Ascending aorta (tissue), 2 donors: ENCODE measurements at regions of chr1 and their contacts with region 1.

Region 1: GRCh38 chr1:41152622-41153044 is 89.5 kb downstream of the SCMH1 start:
- DNase-seq: peak in 1 of 2 donors; percentile 67
- H3K4me3 ChIP-seq: no peak overlapping the region
- H3K27ac ChIP-seq: peak overlapping the region; percentile 78 to 79
- H3K4me1 ChIP-seq: peaks cover 3 to 16% of the 10 kb centered on the region in 2 donors
- H3K27me3 ChIP-seq: no peaks in the 10 kb centered on the region
- CTCF ChIP-seq: no peak

Region 2: GRCh38 chr1:40979233-40980067 is 173.2 kb before region 1 on chr1 and contains the start of gene CTPS1:
- intact Hi-C with region 1: loop called (anchors 5 kb)
- DNase-seq: peak; percentile 71 to 96
- H3K4me3 ChIP-seq: peak within 1 kb of the TSS; percentile 78 to 83
- H3K27ac ChIP-seq: peak within 1 kb of the TSS; percentile 96 to 98
- H3K4me1 ChIP-seq: peaks cover 7 to 30% of the 10 kb centered on the region in 2 donors
- H3K27me3 ChIP-seq: no peaks in the 10 kb centered on the region
- CTCF ChIP-seq: peak in 1 of 3 experiments; percentile 21
- total RNA-seq, gene CTPS1: 33.0 TPM

Region 3: DNA sequence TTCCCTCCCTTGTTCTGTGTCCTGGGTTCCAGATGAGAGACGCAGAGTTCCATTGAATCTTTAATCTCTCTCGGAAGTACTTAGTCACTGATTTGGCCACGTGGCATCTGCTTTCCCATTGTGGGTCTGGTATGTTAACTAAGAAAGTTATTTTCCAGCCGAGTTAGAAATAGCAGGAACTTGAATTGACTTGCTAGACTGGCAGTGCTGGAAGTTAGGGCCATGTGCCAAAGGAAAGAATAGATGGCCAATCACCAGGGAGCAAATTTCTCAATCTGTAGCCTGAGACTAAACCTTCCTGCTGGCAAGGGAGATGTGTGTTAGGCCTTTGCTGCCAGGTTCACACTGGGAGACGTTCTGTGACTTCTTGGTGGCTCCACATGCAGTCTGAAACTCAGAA is 106.9 kb before region 1 on chr1:
- intact Hi-C with region 1: loop called (anchors 2 kb)
- DNase-seq: peak; percentile 57 to 94
- H3K4me3 ChIP-seq: no peak overlapping the region
- H3K27ac ChIP-seq: peak overlapping the region; percentile 76 to 88
- H3K4me1 ChIP-seq: peaks cover 6 to 35% of the 10 kb centered on the region in 2 donors
- H3K27me3 ChIP-seq: no peaks in the 10 kb centered on the region
- CTCF ChIP-seq: no peak

Region 4: DNA sequence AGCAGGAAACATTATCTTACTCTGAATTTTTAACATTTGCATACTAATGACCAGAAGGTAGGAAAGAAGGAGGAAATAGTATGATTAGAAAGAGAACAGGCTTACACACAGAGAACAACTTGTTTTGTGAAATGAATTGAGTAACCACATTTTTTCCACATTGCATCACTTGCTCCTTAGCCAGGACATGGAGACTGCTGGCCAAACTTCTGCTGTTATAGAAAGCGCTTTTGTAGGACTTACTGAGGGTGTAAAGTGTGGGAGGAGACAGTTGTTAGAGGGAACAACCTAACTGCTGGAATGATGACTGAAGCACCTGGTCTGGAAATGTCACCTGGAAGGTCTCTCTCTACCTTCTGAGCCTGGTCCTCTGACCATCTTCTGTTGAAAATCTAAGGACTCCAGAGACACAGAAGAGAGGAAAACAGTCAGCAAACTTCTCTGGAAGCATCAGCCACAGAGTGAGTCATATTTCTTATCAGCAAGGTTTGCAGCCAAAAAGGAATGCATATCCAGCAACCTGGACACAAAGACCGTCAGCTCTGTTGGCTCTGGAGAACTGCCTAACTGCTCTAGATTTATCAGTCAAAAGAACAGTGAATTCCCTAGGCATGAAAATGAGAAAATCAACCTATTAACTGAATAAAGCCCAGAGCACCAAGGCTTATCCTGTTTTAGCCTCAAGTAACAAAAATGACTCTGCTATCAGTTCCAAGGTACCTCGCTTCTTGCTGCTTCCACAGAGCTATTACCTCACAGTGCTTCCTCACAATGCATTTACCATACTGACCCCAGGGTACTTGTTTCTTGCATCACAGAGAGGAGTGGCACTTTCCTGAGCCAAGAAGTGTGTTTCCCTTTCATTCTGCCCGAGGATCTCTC is 43.1 kb before region 1 on chr1:
- intact Hi-C with region 1: loop called (anchors 2 kb)
- DNase-seq: peak in 1 of 2 donors; percentile 76
- H3K4me3 ChIP-seq: peak overlapping the region in 1 of 2 donors; percentile 42
- H3K27ac ChIP-seq: peak overlapping the region; percentile 98 to 99
- H3K4me1 ChIP-seq: peaks cover 8 to 25% of the 10 kb centered on the region in 2 donors
- H3K27me3 ChIP-seq: no peaks in the 10 kb centered on the region
- CTCF ChIP-seq: no peak

Region 5: GRCh38 chr1:41241782-41242341 is 89.2 kb after region 1 on chr1 and contains the start of gene SCMH1:
- intact Hi-C with region 1: loop called (anchors 2 kb)
- DNase-seq: peak in 1 of 2 donors; percentile 68
- H3K4me3 ChIP-seq: peak within 1 kb of the TSS; percentile 90 to 95
- H3K27ac ChIP-seq: peak within 1 kb of the TSS; percentile 96 to 98
- H3K4me1 ChIP-seq: peaks cover 0 to 16% of the 10 kb centered on the region in 2 donors
- H3K27me3 ChIP-seq: no peaks in the 10 kb centered on the region
- CTCF ChIP-seq: no peak
- total RNA-seq, gene SCMH1: 55.9 TPM

Region 6: GRCh38 chr1:41387667-41388091 is 235.0 kb after region 1 on chr1:
- intact Hi-C with region 1: loop called (anchors 10 kb)
- DNase-seq: peak in 1 of 2 donors; percentile 85
- H3K4me3 ChIP-seq: no peak overlapping the region
- H3K27ac ChIP-seq: peak overlapping the region in 1 of 2 donors; percentile 17
- H3K4me1 ChIP-seq: peaks cover 0 to 15% of the 10 kb centered on the region in 2 donors
- H3K27me3 ChIP-seq: no peaks in the 10 kb centered on the region
- CTCF ChIP-seq: no peak

Region 7: DNA sequence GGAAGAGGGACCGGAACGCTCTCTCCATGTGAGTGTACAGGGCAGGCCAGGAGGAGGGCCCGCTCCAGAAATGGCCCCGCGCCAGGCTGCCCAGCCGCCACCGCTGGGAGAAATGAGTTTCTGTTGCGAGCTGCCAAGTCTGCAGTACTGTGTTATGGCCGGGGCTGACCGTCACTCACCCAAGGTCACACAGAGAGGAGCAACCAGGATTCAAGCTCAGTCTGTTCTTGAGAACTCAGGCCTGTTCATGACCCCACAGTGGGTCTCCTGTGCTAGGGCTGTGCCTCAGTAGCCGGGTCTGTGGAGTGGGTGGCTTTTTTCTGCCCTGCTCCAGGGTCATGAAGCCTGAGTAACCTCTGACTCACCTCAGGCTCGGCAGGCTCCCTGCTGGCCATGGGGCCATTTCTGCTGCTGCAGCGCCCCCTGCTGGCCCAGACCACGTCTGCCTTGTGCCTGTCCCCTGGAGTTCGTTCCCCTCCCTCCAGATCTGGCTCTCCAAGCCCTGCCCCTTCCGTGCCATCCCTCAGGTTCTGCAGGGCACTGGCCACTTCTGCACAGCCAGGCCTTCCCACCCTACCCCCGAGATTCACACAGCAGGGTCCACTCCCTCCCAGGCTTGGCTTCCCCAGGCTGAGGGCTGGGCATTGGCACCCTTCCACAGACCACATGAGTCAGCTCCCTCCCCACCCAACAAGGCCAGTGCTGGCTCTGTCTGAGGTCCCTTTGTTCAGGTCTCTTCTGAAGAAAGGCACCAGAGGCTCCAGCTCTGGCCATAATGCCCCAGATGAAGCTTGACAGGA is 280.0 kb after region 1 on chr1:
- intact Hi-C with region 1: loop called (anchors 10 kb)
- DNase-seq: peak; percentile 52 to 96
- H3K4me3 ChIP-seq: peak overlapping the region; percentile 0 to 13
- H3K27ac ChIP-seq: peak overlapping the region; percentile 46 to 63
- H3K4me1 ChIP-seq: peaks cover 23 to 32% of the 10 kb centered on the region in 2 donors
- H3K27me3 ChIP-seq: no peaks in the 10 kb centered on the region
- CTCF ChIP-seq: peak; percentile 90 to 98 (median 97)